ENCODE measurements at regions of chr1 and their contacts with region 1.

Region 1: GRCh38 chr1:201481761-201482493 is 12.9 kb upstream of the PHLDA3 start:
- DNase-seq: peak; percentile 94
- H3K4me3 Mint-ChIP-seq: peak overlapping the region; percentile 63
- H3K27ac Mint-ChIP-seq: peak overlapping the region; percentile 13
- H3K4me1 Mint-ChIP-seq: peaks cover 25% of the 10 kb centered on the region
- H3K27me3 Mint-ChIP-seq: no peaks in the 10 kb centered on the region
- CTCF ChIP-seq: peak; percentile 94

Region 2: GRCh38 chr1:201229771-201230635 is 251.9 kb before region 1 on chr1:
- CTCF ChIA-PET with region 1: no interaction called
- intact Hi-C with region 1: no loop called
- DNase-seq: no peak
- H3K4me3 Mint-ChIP-seq: no peak overlapping the region
- H3K27ac Mint-ChIP-seq: no peak overlapping the region
- H3K4me1 Mint-ChIP-seq: no peaks in the 10 kb centered on the region
- H3K27me3 Mint-ChIP-seq: peaks cover 88% of the 10 kb centered on the region
- CTCF ChIP-seq: no peak

Region 3: GRCh38 chr1:201447911-201448871 is 33.7 kb before region 1 on chr1:
- CTCF ChIA-PET with region 1: interaction called, 149 read pairs
- intact Hi-C with region 1: loop called (anchors 1 kb)
- DNase-seq: peak; percentile 88
- H3K4me3 Mint-ChIP-seq: no peak overlapping the region
- H3K27ac Mint-ChIP-seq: peak overlapping the region; percentile 29
- H3K4me1 Mint-ChIP-seq: peaks cover 46% of the 10 kb centered on the region
- H3K27me3 Mint-ChIP-seq: no peaks in the 10 kb centered on the region
- CTCF ChIP-seq: peak; percentile 91

Region 4: GRCh38 chr1:201463071-201463552 is 18.8 kb before region 1 on chr1:
- CTCF ChIA-PET with region 1: interaction called, 26 read pairs
- intact Hi-C with region 1: loop called (anchors 2 kb)
- DNase-seq: no peak
- H3K4me3 Mint-ChIP-seq: peak overlapping the region; percentile 27
- H3K27ac Mint-ChIP-seq: peak overlapping the region; percentile 96
- H3K4me1 Mint-ChIP-seq: peaks cover 81% of the 10 kb centered on the region
- H3K27me3 Mint-ChIP-seq: no peaks in the 10 kb centered on the region
- CTCF ChIP-seq: peak; percentile 37

Region 5: GRCh38 chr1:201505505-201505893 is 23.6 kb after region 1 on chr1:
- CTCF ChIA-PET with region 1: interaction called, 172 read pairs
- intact Hi-C with region 1: no loop called
- DNase-seq: peak; percentile 50
- H3K4me3 Mint-ChIP-seq: peak overlapping the region; percentile 63
- H3K27ac Mint-ChIP-seq: peak overlapping the region; percentile 50
- H3K4me1 Mint-ChIP-seq: peaks cover 53% of the 10 kb centered on the region
- H3K27me3 Mint-ChIP-seq: no peaks in the 10 kb centered on the region
- CTCF ChIP-seq: no peak

Region 6: DNA sequence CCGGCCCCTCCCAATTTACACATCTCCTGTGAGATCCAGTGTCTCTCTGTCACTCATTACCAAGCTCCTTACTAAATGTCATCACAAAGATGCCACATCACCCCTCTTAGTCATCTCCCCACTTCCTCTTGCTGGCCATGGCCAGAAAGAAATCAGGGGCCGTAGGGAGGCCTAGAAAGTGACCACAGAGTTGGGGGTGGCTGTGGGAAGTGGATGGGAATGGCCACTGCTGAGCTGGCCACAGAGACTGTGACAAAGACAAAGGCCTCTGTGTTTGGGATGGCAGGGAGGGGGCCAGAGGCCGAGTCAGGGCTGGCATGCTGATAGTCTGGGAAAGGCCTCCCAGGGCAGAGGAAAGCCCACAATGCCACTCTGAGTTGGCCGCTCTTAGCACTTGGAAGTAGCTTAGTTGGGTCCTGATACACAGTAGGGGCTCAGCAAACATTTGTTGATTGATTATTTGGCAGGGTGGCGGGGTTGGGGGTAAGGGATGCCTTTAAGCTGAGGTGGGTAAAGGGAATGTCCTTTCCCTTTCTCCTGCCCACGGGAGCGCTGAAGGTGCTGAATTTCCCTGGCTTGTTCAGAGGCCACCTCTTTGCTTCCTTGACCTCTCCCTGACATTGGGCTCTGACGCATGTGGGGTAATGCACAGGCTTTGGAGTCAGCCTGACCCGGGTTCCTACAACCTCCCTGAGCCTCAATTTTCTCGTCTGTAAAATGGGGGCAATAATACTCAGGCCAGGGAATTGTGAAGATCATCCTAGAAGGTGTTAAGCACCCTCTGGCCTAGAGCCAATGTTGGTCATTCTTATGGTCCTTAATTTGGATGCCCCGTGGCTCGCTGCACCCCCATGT is 70.2 kb after region 1 on chr1:
- CTCF ChIA-PET with region 1: interaction called, 10 read pairs
- intact Hi-C with region 1: no loop called
- DNase-seq: peak; percentile 89
- H3K4me3 Mint-ChIP-seq: peak overlapping the region; percentile 6
- H3K27ac Mint-ChIP-seq: peak overlapping the region; percentile 83
- H3K4me1 Mint-ChIP-seq: peaks cover 58% of the 10 kb centered on the region
- H3K27me3 Mint-ChIP-seq: no peaks in the 10 kb centered on the region
- CTCF ChIP-seq: no peak